ENCODE measurements at regions of chr6 and their contacts with region 1.

Region 1: GRCh38 chr6:28789553-28790083 is 134.2 kb downstream of the TRIM27 start:
- DNase-seq: peak; percentile 62 to 91 (median 63)
- ATAC-seq: peak; percentile 78
- H3K4me3 ChIP-seq: peak overlapping the region; percentile 66
- H3K27ac ChIP-seq: peak overlapping the region; percentile 83
- H3K4me1 ChIP-seq: peaks cover 9 to 10% of the 10 kb centered on the region in 2 experiments; a peak in 4 of 5 replicates
- H3K27me3 ChIP-seq: no peaks in the 10 kb centered on the region
- CTCF ChIP-seq: no peak
- EP300 ChIP-seq: peak; percentile 65
- POLR2A ChIP-seq: no peak
- RAD21 ChIP-seq: peak in 1 of 2 experiments; percentile 21; a peak in 2 of 4 replicates

Region 2: GRCh38 chr6:28322661-28323060 is 467.0 kb before region 1 on chr6:
- CTCF ChIA-PET with region 1: no interaction called
- POLR2A ChIA-PET with region 1: no interaction called
- in situ Hi-C with region 1: no loop called
- intact Hi-C with region 1: no loop called
- DNase-seq: no peak
- ATAC-seq: no peak
- H3K4me3 ChIP-seq: no peak overlapping the region
- H3K27ac ChIP-seq: no peak overlapping the region
- H3K4me1 ChIP-seq: no peaks in the 10 kb centered on the region
- H3K27me3 ChIP-seq: no peaks in the 10 kb centered on the region
- CTCF ChIP-seq: no peak
- EP300 ChIP-seq: no peak
- POLR2A ChIP-seq: no peak
- RAD21 ChIP-seq: no peak

Region 3: DNA sequence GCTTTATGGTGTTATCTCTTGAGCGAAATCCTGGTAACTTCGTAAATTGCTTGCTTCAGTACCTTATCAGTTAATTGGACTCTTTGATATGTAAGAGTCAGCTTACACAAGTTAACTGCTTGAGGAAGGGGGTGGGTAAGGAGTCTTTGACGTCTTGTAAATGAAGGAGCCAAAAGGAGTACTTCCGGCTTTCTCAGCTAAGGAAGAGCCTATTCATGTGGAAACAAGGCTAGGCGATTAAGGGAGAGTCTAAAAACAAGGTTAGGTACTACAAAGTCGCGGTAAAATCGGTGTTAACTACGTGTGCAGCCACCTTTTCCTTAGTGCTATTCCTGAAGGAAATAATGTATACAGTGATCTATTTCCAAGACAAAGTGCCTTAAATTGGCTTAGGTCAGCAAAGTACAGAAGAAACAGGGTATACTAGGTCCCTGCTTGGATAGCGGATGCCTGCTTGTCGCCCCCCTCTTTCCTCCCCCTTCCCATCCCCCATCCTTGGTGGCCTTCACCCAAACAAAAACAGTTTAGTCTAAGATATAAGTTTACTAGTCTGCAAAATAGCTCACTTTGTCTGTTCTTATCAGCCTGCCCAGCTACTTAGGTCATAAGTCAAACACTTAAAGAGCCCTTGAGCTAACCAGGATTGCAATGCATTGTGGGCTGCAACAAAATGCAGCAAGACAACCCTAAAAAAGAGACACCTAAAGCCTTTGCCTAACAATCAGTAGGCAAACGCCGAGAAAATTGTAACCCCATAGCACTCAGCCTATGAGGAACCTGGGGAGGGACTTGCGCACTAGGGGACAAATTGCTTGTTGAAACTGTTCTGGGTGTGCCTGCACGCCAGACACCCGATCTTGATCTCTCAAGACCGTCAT is 13.1 kb before region 1 on chr6:
- CTCF ChIA-PET with region 1: no interaction called
- POLR2A ChIA-PET with region 1: interaction called, 11 read pairs
- in situ Hi-C with region 1: no loop called
- intact Hi-C with region 1: loop called (anchors 1 kb)
- DNase-seq: peak in 3 of 4 experiments; percentile 15 to 83 (median 30)
- ATAC-seq: peak; percentile 83
- H3K4me3 ChIP-seq: peak overlapping the region; percentile 26
- H3K27ac ChIP-seq: peak overlapping the region; percentile 67
- H3K4me1 ChIP-seq: peaks cover 22 to 30% of the 10 kb centered on the region in 2 experiments
- H3K27me3 ChIP-seq: no peaks in the 10 kb centered on the region
- CTCF ChIP-seq: no peak
- EP300 ChIP-seq: peak; percentile 50; the same call in 1 of the 2 replicates
- POLR2A ChIP-seq: 0 out of 2 replicates have a peak, but pooled peaks have one; percentile 47
- RAD21 ChIP-seq: 0 out of 4 replicates have a peak, but pooled peaks of 1 of the 2 experiments have one; percentile 21

Region 4: DNA sequence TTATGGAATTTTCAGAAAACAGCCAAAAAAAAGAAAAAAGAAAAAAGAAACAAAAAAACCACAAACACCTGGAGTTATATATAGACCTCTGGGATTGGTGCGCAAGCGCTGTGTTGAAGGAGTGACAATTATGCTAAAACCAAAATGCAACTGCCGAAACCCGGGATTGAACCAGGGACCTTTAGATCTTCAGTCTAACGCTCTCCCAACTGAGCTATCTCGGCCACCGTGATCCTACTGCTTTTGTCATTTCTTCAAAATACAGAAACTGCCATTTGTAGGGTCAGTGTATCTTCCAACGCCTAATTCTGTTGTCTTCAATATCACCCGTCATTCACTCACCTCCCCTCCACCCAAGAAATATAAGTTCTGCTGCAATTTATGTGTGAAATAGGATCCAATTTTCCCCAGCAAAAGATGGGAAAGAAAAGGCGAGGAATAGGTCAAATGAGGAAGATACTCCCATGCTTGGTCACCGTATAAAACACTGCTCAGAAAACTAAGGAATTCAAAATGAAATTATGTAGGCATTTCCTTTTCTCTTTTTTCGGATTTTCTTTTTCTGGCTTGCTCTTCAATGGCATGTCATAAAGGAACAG is 18.2 kb after region 1 on chr6:
- CTCF ChIA-PET with region 1: interaction called, 3 read pairs
- POLR2A ChIA-PET with region 1: interaction called, 13 read pairs
- in situ Hi-C with region 1: no loop called
- intact Hi-C with region 1: loop called (anchors 1 kb)
- DNase-seq: peak; percentile 63 to 95 (median 70)
- ATAC-seq: peak; percentile 49
- H3K4me3 ChIP-seq: peak overlapping the region; percentile 52
- H3K27ac ChIP-seq: peak overlapping the region; percentile 25
- H3K4me1 ChIP-seq: peaks cover 11 to 12% of the 10 kb centered on the region in 2 experiments; a peak in 4 of 5 replicates
- H3K27me3 ChIP-seq: no peaks in the 10 kb centered on the region
- CTCF ChIP-seq: no peak
- EP300 ChIP-seq: peak; percentile 79
- POLR2A ChIP-seq: no peak
- RAD21 ChIP-seq: no peak; a peak in 1 of 4 replicates

Region 5: DNA sequence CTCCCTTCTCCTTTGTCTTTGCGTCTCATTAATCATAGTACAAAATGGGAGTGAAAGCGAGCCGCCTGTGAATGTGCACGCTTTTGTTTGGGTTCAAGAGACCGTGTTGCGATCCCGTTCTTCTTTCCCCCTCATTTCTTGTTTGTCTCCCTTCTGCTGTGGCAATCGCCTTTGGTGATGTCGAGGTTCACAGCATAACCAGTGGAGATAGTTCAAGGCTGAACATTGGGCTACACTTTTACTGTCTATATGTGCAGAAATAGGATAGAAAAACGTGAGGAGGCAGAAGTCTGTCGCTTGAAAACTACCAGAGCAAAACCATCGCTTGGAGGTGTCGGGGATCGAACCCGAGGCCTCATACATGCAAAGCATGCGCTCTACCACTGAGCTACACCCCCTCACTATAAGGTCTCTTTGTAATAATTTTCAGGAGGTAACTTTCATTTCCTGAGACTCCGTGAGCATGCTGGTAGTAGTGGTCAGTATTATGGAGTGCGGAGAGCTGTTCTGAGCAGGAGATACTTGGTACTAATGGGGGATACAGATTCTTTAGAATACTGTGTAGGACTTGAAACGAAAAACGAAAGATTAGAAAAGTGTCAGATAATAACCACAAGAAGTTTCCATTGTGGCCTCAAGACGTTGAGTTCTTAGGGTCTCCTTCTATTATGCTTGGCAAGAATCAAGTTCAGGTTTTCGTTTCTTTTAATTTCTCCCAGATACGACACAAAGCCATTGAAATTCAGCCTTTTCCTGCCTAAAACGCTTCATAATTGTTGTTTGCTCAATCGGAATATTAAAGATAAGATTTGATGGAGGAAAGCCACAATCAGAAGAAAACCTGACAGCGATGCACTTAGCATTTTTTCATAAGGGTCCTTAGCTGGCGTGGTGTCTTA is 27.5 kb after region 1 on chr6:
- CTCF ChIA-PET with region 1: no interaction called
- POLR2A ChIA-PET with region 1: no interaction called
- in situ Hi-C with region 1: no loop called
- intact Hi-C with region 1: loop called (anchors 2 kb)
- DNase-seq: peak; percentile 63 to 95 (median 76)
- ATAC-seq: peak; percentile 91
- H3K4me3 ChIP-seq: peak overlapping the region; percentile 45
- H3K27ac ChIP-seq: peak overlapping the region; percentile 59
- H3K4me1 ChIP-seq: peaks cover 7 to 11% of the 10 kb centered on the region in 2 experiments; a peak in 4 of 5 replicates
- H3K27me3 ChIP-seq: no peaks in the 10 kb centered on the region
- CTCF ChIP-seq: no peak
- EP300 ChIP-seq: peak; percentile 77
- POLR2A ChIP-seq: no peak
- RAD21 ChIP-seq: no peak; a peak in 1 of 4 replicates